ENCODE measurements at regions of chr9 and their contacts with region 1.

Region 1: GRCh38 chr9:131709771-131710454 is 30.0 kb downstream of the RAPGEF1 start:
- DNase-seq: peak; percentile 32
- H3K4me3 Mint-ChIP-seq: no peak overlapping the region
- H3K27ac Mint-ChIP-seq: peak overlapping the region; percentile 66
- H3K4me1 Mint-ChIP-seq: peaks cover 61% of the 10 kb centered on the region
- H3K27me3 Mint-ChIP-seq: no peaks in the 10 kb centered on the region

Region 2: GRCh38 chr9:131727184-131727759 is 17.4 kb after region 1 on chr9:
- CTCF ChIA-PET with region 1: interaction called, 11 read pairs
- DNase-seq: no peak
- H3K4me3 Mint-ChIP-seq: peak overlapping the region; percentile 56
- H3K27ac Mint-ChIP-seq: peak overlapping the region; percentile 97
- H3K4me1 Mint-ChIP-seq: peaks cover 85% of the 10 kb centered on the region
- H3K27me3 Mint-ChIP-seq: no peaks in the 10 kb centered on the region